ENCODE measurements at regions of chr11 and their contacts with region 1.

Region 1: GRCh38 chr11:7986768-7987559 is at the start of gene EIF3F:
- DNase-seq: peak; percentile 93
- H3K4me3 ChIP-seq: peak within 1 kb of the TSS; percentile 86 to 97 (median 92)
- H3K27ac ChIP-seq: peak within 1 kb of the TSS; percentile 81 to 88 (median 84)
- H3K4me1 ChIP-seq: peaks cover 22 to 53% (median 41%) of the 10 kb centered on the region in 6 donors
- H3K27me3 ChIP-seq: no peaks in the 10 kb centered on the region
- CTCF ChIP-seq: peak; percentile 74 to 92 (median 86)
- POLR2A ChIP-seq: no peak
- total RNA-seq, gene EIF3F: 189 to 351 (median 204) TPM

Region 2: DNA sequence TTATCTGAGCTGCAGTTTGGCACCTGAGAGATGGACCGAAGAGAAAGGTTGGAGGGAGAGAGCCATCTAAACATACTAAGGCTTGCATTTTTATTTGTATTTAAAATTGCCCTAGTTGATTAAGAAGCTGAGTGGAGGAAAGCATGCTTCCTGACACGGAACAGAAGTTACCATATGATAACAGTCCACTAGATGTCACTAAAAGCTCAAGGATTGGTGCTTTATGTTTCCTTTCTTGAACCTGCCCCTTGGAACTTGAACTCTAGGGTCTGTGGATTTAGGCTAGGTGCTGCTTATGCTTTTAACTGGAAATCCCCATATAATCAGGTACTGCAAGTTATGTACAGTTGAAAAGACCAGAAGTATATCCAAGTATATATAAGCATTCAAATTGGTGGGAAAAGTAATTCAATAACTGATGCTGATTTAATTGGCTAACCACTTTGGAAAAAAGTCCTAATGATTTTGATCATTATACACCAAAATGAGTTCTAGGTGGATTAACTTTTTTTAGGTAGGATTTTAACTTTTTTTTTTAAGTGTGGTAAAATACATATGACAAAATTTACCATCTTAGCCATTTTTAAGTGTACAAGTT is 888.6 kb before region 1 on chr11:
- intact Hi-C with region 1: loop called (anchors 10 kb)
- DNase-seq: no peak
- H3K4me3 ChIP-seq: no peak overlapping the region
- H3K27ac ChIP-seq: no peak overlapping the region
- H3K4me1 ChIP-seq: no peaks in the 10 kb centered on the region
- H3K27me3 ChIP-seq: peaks cover 0 to 19% (median 0%) of the 10 kb centered on the region in 7 donors
- CTCF ChIP-seq: peak in 10 of 11 experiments; percentile 29 to 76 (median 54)
- POLR2A ChIP-seq: no peak

Region 3: GRCh38 chr11:7892840-7893254 is 94.1 kb before region 1 on chr11:
- intact Hi-C with region 1: loop called (anchors 5 kb)
- DNase-seq: no peak
- H3K4me3 ChIP-seq: no peak overlapping the region
- H3K27ac ChIP-seq: no peak overlapping the region
- H3K4me1 ChIP-seq: peaks cover 0 to 11% (median 6%) of the 10 kb centered on the region in 6 donors
- H3K27me3 ChIP-seq: no peaks in the 10 kb centered on the region
- CTCF ChIP-seq: peak; percentile 35 to 74 (median 58)
- POLR2A ChIP-seq: no peak

Measured in spleen (tissue), 13 donors.